Activated CD4-positive, alpha-beta memory T cell treated with anti-CD3 and anti-CD28 coated beads, Interleukin-2, amount 10 ng/mL, durations not matched to agents 7 days and 5 days (primary cell): ENCODE measurements at regions of chr3 and their contacts with region 1.

Region 1: DNA sequence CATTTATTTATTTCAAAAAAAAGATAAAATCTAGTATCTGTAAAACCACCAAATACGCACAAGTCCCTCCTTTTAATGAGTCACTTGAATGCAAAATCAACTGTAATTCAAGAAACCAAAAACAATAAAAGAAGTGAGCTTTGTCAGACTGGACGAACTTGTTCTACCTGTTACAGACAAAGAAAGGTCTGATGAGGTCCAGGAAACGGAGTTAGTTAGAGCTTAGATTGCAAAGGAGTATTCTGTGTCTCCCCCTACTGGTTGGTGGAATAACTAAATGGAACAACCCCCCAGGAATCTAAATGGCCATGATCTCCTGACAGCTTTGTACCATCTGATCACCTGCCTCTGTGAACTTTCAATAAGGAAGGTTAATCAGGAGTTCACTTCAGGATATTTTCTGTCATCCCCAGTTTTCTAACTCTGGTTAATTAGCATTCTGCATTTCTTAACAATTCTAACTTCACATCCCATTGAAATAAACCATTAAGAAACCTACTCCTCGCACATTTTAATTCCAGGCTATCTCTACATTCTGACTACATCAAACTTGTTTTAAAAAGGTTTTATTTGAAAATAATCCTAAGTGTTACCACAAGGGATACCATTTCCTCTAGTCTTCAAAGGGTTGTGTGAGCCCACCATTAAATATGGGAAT is 333.0 kb upstream of the SATB1 start:
- DNase-seq: no peak
- H3K4me3 Mint-ChIP-seq: no peak overlapping the region
- H3K27ac Mint-ChIP-seq: peak overlapping the region; percentile 40
- H3K4me1 Mint-ChIP-seq: peaks cover 36% of the 10 kb centered on the region
- H3K27me3 Mint-ChIP-seq: no peaks in the 10 kb centered on the region

Region 2: DNA sequence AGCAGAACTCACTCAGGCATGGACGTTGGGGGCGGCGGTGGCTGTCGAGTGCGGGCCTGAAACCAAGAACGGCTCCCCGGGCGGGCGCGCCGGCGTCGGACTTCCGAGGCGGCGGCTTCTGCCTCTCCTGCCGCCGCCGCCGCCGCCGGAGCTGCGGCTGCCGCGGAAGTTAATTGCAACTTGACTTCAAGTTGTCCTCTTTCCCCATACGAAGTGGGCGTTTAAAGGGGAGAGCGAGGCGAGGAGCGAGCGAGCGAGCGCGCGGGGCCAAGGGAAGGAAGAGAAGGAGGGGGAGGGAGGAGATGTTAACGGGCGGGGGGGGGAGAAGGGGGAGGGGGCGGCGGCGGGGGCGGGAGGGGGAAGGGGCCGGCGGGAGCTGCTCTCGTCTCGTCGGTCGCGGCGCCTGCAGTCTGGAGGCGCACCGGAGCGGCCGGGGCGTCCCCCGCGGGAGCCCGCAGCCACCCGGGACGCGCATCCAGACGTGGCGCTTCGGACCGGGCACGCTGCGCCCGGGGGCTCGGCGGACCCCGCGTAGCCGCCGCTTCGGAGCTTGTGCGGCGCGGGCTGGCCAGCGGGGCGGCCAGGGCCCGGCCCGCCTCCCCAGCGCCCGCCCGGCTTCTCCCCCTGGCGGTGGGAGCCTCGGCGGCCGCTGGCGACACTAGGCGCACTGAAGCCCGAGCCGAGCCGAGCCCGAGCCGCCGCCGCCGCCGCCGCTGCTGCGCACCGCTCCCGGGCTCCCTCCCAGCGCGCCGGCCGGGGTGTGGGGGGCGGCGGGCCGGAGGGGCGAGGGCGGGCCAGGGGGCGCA is 313.4 kb before region 1 on chr3:
- CTCF ChIA-PET with region 1: interaction called, 12 read pairs
- POLR2A ChIA-PET with region 1: interaction called, 15 read pairs
- DNase-seq: peak; percentile 81
- H3K4me3 Mint-ChIP-seq: peak overlapping the region; percentile 94
- H3K27ac Mint-ChIP-seq: peak overlapping the region; percentile 91
- H3K4me1 Mint-ChIP-seq: peaks cover 39% of the 10 kb centered on the region
- H3K27me3 Mint-ChIP-seq: no peaks in the 10 kb centered on the region

Region 3: DNA sequence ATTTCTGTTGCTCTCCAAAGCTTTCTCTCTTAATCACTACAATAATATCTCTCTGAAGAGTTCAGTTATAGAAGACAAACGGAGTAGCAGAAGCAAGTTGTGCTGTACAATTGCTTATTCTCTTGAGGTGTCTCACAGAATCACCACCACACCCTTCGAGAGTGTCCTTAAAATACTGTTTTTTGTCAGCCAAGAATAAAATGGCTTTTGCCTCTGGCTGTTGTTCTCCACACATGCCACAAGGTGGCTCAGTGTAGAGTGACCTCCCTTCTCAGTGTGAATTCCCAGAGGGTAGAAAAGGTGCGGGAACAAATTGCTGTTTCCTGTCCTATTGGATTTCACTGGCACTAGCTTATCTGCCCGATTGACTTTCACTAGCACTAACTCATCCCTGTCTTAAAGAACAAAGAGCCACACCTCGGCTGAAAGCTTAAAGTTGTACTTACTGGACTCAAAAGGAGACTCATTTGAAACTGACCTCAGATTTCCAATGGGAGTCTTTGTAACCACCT is 198.8 kb before region 1 on chr3:
- CTCF ChIA-PET with region 1: interaction called, 46 read pairs
- POLR2A ChIA-PET with region 1: interaction called, 11 read pairs
- DNase-seq: peak; percentile 42
- H3K4me3 Mint-ChIP-seq: no peak overlapping the region
- H3K27ac Mint-ChIP-seq: peak overlapping the region; percentile 80
- H3K4me1 Mint-ChIP-seq: peaks cover 59% of the 10 kb centered on the region
- H3K27me3 Mint-ChIP-seq: no peaks in the 10 kb centered on the region

Region 4: GRCh38 chr3:18634461-18634860 is 123.7 kb before region 1 on chr3:
- CTCF ChIA-PET with region 1: no interaction called
- POLR2A ChIA-PET with region 1: no interaction called
- DNase-seq: no peak
- H3K4me3 Mint-ChIP-seq: no peak overlapping the region
- H3K27ac Mint-ChIP-seq: no peak overlapping the region
- H3K4me1 Mint-ChIP-seq: peaks cover 5% of the 10 kb centered on the region
- H3K27me3 Mint-ChIP-seq: no peaks in the 10 kb centered on the region

Region 5: DNA sequence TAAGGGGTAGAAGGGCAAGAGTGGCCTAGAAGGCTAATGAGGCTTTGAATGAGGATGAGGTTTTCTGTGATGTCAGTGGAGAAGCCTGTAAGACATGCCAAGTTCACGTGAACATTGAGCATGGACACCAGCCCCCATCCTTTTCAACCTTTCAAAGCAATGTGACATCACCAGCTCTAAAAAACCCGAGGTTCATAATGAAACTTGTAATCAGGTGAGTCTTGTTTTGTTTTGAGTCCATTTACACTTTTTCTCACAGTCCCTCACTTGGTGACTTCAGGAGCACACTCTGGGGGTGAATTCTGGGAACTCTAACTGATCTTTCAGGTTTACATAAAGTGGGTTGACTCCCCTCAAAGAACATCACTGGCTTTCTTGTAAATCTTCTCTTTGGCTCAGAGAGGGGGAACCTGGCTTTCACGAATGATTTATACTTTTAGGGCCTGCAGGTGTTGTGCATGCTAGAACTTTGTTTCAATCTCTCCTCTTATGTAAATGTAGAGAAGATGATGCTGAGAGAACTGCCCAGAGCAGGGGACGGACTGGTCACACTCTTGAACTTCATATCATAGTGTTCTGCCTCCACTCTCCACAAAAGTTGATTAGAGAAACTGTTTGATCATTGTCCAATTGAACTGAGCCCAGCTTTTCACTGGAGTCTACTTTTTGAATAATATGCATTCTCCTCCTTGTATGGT is 108.4 kb before region 1 on chr3:
- CTCF ChIA-PET with region 1: interaction called, 10 read pairs
- POLR2A ChIA-PET with region 1: interaction called, 3 read pairs
- DNase-seq: peak; percentile 61
- H3K4me3 Mint-ChIP-seq: peak overlapping the region; percentile 25
- H3K27ac Mint-ChIP-seq: peak overlapping the region; percentile 90
- H3K4me1 Mint-ChIP-seq: peaks cover 86% of the 10 kb centered on the region
- H3K27me3 Mint-ChIP-seq: no peaks in the 10 kb centered on the region

Region 6: DNA sequence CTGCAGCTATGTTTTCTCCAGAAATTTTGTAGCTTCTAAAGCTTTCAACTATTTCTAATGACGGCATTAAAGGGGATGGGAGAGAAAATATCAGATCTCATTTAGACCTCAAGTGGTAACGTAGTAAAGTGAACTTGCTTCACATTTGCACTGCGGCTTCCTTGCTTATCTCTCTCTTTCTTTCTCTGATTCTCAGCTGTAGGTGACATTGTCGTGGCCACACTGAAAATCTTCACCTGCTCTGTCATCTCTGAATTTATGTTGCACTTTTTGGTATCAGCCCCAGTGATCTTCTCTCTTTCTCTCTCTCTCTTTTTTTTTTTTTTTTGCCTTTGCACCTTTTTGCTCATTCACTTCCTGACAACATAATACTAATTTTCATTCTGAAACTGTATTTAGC is 78.9 kb before region 1 on chr3:
- CTCF ChIA-PET with region 1: interaction called, 15 read pairs
- POLR2A ChIA-PET with region 1: interaction called, 4 read pairs
- DNase-seq: peak; percentile 64
- H3K4me3 Mint-ChIP-seq: peak overlapping the region; percentile 43
- H3K27ac Mint-ChIP-seq: peak overlapping the region; percentile 85
- H3K4me1 Mint-ChIP-seq: peaks cover 79% of the 10 kb centered on the region
- H3K27me3 Mint-ChIP-seq: no peaks in the 10 kb centered on the region